CD4-positive, alpha-beta memory T cell (primary cell): ENCODE measurements at regions of chr2 and their contacts with region 1.

Region 1: GRCh38 chr2:203993560-203993959 is 57.0 kb downstream of the ICOS start:
- DNase-seq: peak in 3 of 5 donors; percentile 19 to 53 (median 34)
- H3K4me3 ChIP-seq: no peak overlapping the region
- H3K4me3 Mint-ChIP-seq: no peak overlapping the region
- H3K27ac ChIP-seq: peak overlapping the region; percentile 10
- H3K27ac Mint-ChIP-seq: no peak overlapping the region
- H3K4me1 ChIP-seq: peaks cover 74% of the 10 kb centered on the region
- H3K4me1 Mint-ChIP-seq: peaks cover 25 to 35% (median 30%) of the 10 kb centered on the region in 4 donors
- H3K27me3 ChIP-seq: no peaks in the 10 kb centered on the region
- H3K27me3 Mint-ChIP-seq: no peaks in the 10 kb centered on the region

Region 2: GRCh38 chr2:204005940-204006721 is 12.6 kb after region 1 on chr2:
- CTCF ChIA-PET with region 1: interaction called, 7 read pairs
- POLR2A ChIA-PET with region 1: interaction called, 12 read pairs
- intact Hi-C with region 1: loop called (anchors 2 kb)
- DNase-seq: peak in 1 of 5 donors; percentile 32
- H3K4me3 ChIP-seq: no peak overlapping the region
- H3K4me3 Mint-ChIP-seq: peak overlapping the region in 7 of 8 donors; percentile 13 to 70 (median 48)
- H3K27ac ChIP-seq: peak overlapping the region; percentile 26
- H3K27ac Mint-ChIP-seq: peak overlapping the region; percentile 0 to 92 (median 88)
- H3K4me1 ChIP-seq: peaks cover 71% of the 10 kb centered on the region
- H3K4me1 Mint-ChIP-seq: peaks cover 63 to 88% (median 75%) of the 10 kb centered on the region in 4 donors
- H3K27me3 ChIP-seq: no peaks in the 10 kb centered on the region
- H3K27me3 Mint-ChIP-seq: no peaks in the 10 kb centered on the region